ENCODE measurements at regions of chr12 and their contacts with region 1.

Region 1: DNA sequence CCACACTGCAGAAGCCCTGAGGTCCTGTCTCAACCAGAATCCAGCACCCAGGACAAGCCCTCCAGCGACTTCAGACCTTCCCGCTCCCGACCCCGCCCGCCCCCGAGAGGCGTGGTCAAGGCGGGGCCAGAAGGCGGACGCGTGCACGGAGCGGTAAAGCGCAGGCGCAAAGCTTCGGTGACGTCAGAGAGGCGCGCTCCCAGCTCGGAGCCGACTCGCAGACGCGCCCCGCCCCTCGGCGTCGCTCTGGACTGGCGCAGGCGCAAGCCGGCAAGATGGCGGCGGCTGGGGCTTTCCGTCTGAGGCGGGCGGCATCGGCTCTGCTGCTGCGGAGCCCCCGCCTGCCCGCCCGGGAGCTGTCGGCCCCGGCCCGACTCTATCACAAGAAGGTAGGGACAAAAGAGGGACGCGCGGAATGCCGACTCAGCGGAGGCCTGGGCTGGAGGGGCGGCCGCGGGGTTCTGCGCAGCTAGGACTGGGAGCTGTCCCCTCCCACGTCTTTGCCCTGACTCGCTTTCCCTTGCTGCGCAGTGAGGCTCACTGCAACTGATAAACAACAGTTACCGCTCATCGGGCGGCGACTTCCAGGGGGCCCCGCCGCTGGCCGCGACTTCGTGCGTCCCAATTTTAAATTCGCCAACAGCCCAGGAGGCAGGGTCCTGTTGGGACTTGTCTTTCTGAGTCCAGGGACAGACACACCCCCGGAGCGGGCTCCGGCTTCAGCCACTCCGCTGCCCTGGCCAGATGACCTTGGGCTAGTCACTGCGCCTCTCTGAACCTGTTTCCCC is at the start of gene ISCU:
- DNase-seq: peak; percentile 97 to 100 (median 99)
- ATAC-seq: peak; percentile 63
- H3K4me3 ChIP-seq: peak within 1 kb of the TSS; percentile 97
- H3K4me3 Mint-ChIP-seq: peak within 1 kb of the TSS; percentile 99
- H3K27ac ChIP-seq: peak within 1 kb of the TSS; percentile 92 to 94
- H3K27ac Mint-ChIP-seq: peak within 1 kb of the TSS; percentile 96
- H3K4me1 ChIP-seq: peaks cover 63% of the 10 kb centered on the region
- H3K4me1 Mint-ChIP-seq: peaks cover 74% of the 10 kb centered on the region
- H3K27me3 ChIP-seq: no peaks in the 10 kb centered on the region
- H3K27me3 Mint-ChIP-seq: no peaks in the 10 kb centered on the region
- CTCF ChIP-seq: no peak
- total RNA-seq, gene ISCU: 269 to 270 TPM

Region 2: GRCh38 chr12:107760809-107761501 is 801.6 kb before region 1 on chr12 and contains the start of gene PRDM4:
- CTCF ChIA-PET with region 1: no interaction called
- POLR2A ChIA-PET with region 1: no interaction called
- intact Hi-C with region 1: loop called in 1 of 2 experiments (anchors 5 kb)
- DNase-seq: peak; percentile 75 to 98 (median 88)
- ATAC-seq: peak; percentile 91
- H3K4me3 ChIP-seq: peak within 1 kb of the TSS; percentile 78
- H3K4me3 Mint-ChIP-seq: peak within 1 kb of the TSS; percentile 96
- H3K27ac ChIP-seq: peak within 1 kb of the TSS; percentile 51 to 77
- H3K27ac Mint-ChIP-seq: peak within 1 kb of the TSS; percentile 87
- H3K4me1 ChIP-seq: peaks cover 26% of the 10 kb centered on the region
- H3K4me1 Mint-ChIP-seq: peaks cover 48% of the 10 kb centered on the region
- H3K27me3 ChIP-seq: no peaks in the 10 kb centered on the region
- H3K27me3 Mint-ChIP-seq: no peaks in the 10 kb centered on the region
- CTCF ChIP-seq: no peak
- total RNA-seq, gene PRDM4: 40.2 to 44.0 TPM

Region 3: GRCh38 chr12:108618079-108618952 is 55.8 kb after region 1 on chr12:
- CTCF ChIA-PET with region 1: interaction called, 102 read pairs
- POLR2A ChIA-PET with region 1: interaction called, 96 read pairs
- intact Hi-C with region 1: loop called (anchors 1 kb)
- DNase-seq: peak; percentile 61 to 89 (median 72)
- ATAC-seq: peak; percentile 54
- H3K4me3 ChIP-seq: no peak overlapping the region
- H3K4me3 Mint-ChIP-seq: peak overlapping the region; percentile 30
- H3K27ac ChIP-seq: peak overlapping the region; percentile 49 to 80
- H3K27ac Mint-ChIP-seq: peak overlapping the region; percentile 84
- H3K4me1 ChIP-seq: peaks cover 63% of the 10 kb centered on the region
- H3K4me1 Mint-ChIP-seq: peaks cover 59% of the 10 kb centered on the region
- H3K27me3 ChIP-seq: no peaks in the 10 kb centered on the region
- H3K27me3 Mint-ChIP-seq: no peaks in the 10 kb centered on the region
- CTCF ChIP-seq: peak; percentile 98

Region 4: DNA sequence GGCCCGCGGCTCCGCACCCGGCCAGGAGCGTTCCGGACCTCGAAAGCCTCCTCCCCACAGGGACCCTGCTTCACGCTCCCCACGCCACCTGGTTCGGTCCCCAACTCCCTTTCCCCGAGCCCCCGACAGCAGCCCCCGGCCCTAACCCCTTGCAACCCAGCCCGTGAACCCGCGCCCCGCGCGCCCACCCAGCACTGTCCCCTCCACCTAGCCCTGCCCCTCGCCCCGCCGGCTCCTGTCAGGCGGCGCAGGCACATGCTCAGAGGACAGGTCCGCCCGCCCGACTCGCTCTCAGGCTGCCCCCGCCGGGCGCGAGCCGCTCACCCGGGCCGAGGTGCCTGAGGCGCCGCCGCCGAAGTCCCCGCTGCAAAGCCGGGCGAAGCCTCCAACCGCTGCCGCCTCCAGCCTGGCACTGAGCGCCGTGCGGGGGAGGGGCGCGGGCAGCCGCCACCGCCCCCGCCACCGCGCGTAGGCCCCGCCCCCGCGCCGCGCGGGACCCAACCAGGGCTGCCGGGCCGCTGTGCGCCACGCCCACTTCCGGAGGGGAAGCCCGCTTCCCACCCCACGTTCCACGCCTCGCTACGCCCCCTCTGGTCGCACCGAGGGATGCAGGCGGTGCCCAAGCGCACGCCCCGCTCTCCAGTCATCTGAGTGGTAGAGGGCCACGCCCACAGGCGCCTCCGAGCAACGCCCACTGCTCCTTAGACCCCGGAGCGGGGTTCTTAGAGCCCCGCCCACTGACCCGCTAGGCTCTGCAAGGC is 168.7 kb after region 1 on chr12 and contains the start of gene CORO1C:
- CTCF ChIA-PET with region 1: no interaction called
- POLR2A ChIA-PET with region 1: interaction called, 7 read pairs
- intact Hi-C with region 1: loop called (anchors 2 to 5 kb)
- DNase-seq: peak; percentile 88 to 99 (median 92)
- ATAC-seq: peak; percentile 73
- H3K4me3 ChIP-seq: peak within 1 kb of the TSS; percentile 93
- H3K4me3 Mint-ChIP-seq: peak within 1 kb of the TSS; percentile 97
- H3K27ac ChIP-seq: peak within 1 kb of the TSS; percentile 75 to 90
- H3K27ac Mint-ChIP-seq: peak within 1 kb of the TSS; percentile 88
- H3K4me1 ChIP-seq: peaks cover 26% of the 10 kb centered on the region
- H3K4me1 Mint-ChIP-seq: peaks cover 26% of the 10 kb centered on the region
- H3K27me3 ChIP-seq: no peaks in the 10 kb centered on the region
- H3K27me3 Mint-ChIP-seq: no peaks in the 10 kb centered on the region
- CTCF ChIP-seq: peak; percentile 75
- total RNA-seq, gene CORO1C: 6.7 to 7.4 TPM

Region 5: DNA sequence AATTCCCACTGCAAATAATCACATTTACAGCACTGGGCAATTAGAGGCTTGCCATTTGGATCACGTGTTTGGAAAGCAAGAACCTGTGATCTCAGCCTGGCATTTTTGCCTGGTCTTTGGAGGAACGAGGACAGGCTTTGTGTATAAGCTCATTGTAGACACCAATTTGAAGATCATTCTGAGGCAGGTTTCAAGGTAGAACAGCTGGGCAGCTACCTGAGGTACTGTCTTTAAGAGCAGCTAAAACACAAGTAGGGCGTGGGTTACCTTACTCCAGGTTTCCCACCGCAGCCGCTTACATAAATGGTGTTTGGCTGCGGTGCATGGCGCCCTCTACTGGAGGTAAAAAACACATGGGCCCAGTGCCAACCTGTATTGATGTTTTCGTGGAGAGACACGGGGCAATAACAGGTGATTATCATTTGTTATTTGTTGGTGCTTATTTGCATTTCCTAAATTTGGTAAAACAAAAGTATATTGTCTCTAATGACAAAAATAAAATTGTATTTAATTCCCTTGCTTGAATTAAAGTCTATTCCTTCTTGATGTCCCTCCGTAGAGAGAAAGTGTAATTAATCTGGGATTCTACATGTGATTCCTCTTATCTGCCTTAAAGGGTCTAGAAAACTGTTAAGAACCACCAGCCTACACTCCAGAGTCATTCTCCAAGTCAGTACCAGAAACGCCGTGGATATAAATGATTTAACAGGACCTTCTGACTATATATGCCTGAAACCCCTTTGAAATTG is 388.6 kb after region 1 on chr12:
- CTCF ChIA-PET with region 1: interaction called, 3 read pairs
- POLR2A ChIA-PET with region 1: no interaction called
- intact Hi-C with region 1: loop called (anchors 2 to 5 kb)
- DNase-seq: peak; percentile 47 to 86 (median 59)
- ATAC-seq: peak; percentile 95
- H3K4me3 ChIP-seq: no peak overlapping the region
- H3K4me3 Mint-ChIP-seq: no peak overlapping the region
- H3K27ac ChIP-seq: no peak overlapping the region
- H3K27ac Mint-ChIP-seq: no peak overlapping the region
- H3K4me1 ChIP-seq: peaks cover 4% of the 10 kb centered on the region
- H3K4me1 Mint-ChIP-seq: no peaks in the 10 kb centered on the region
- H3K27me3 ChIP-seq: peaks cover 0 to 3% of the 10 kb centered on the region in 2 experiments
- H3K27me3 Mint-ChIP-seq: peaks cover 24% of the 10 kb centered on the region
- CTCF ChIP-seq: peak; percentile 78

Measured in CD4-positive, alpha-beta T cell (primary cell).